Activated CD4-positive, alpha-beta memory T cell treated with anti-CD3 and anti-CD28 coated beads, Interleukin-2, amount 10 ng/mL, durations not matched to agents 7 days and 5 days (primary cell): ENCODE measurements at regions of chr17 and their contacts with region 1.

Region 1: DNA sequence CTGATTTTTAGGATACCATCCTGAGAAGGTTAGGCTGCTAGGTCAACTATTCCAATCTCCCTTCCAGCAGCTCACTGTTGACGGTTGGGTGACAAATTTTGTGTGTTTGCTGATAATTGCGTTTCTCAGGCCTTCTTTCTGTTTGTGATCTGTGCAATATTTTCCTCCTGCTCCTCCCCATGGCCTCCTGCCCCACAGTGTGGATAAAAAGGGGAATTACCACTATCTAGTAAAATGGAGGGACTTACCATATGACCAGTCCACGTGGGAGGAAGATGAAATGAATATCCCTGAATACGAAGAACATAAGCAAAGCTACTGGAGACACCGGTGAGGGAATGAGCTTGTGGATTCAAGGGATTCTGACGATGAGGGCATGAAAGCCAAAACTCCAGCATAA is 9.2 kb downstream of the CHD3 start:
- DNase-seq: no peak
- H3K4me3 Mint-ChIP-seq: no peak overlapping the region
- H3K27ac Mint-ChIP-seq: no peak overlapping the region
- H3K4me1 Mint-ChIP-seq: peaks cover 5% of the 10 kb centered on the region
- H3K27me3 Mint-ChIP-seq: no peaks in the 10 kb centered on the region

Region 2: GRCh38 chr17:7782237-7782636 is 115.5 kb before region 1 on chr17:
- CTCF ChIA-PET with region 1: no interaction called
- POLR2A ChIA-PET with region 1: no interaction called
- DNase-seq: no peak
- H3K4me3 Mint-ChIP-seq: no peak overlapping the region
- H3K27ac Mint-ChIP-seq: no peak overlapping the region
- H3K4me1 Mint-ChIP-seq: no peaks in the 10 kb centered on the region
- H3K27me3 Mint-ChIP-seq: peaks cover 12% of the 10 kb centered on the region

Region 3: GRCh38 chr17:7794075-7794663 is 103.6 kb before region 1 on chr17:
- CTCF ChIA-PET with region 1: no interaction called
- POLR2A ChIA-PET with region 1: no interaction called
- DNase-seq: no peak
- H3K4me3 Mint-ChIP-seq: no peak overlapping the region
- H3K27ac Mint-ChIP-seq: no peak overlapping the region
- H3K4me1 Mint-ChIP-seq: no peaks in the 10 kb centered on the region
- H3K27me3 Mint-ChIP-seq: no peaks in the 10 kb centered on the region

Region 4: DNA sequence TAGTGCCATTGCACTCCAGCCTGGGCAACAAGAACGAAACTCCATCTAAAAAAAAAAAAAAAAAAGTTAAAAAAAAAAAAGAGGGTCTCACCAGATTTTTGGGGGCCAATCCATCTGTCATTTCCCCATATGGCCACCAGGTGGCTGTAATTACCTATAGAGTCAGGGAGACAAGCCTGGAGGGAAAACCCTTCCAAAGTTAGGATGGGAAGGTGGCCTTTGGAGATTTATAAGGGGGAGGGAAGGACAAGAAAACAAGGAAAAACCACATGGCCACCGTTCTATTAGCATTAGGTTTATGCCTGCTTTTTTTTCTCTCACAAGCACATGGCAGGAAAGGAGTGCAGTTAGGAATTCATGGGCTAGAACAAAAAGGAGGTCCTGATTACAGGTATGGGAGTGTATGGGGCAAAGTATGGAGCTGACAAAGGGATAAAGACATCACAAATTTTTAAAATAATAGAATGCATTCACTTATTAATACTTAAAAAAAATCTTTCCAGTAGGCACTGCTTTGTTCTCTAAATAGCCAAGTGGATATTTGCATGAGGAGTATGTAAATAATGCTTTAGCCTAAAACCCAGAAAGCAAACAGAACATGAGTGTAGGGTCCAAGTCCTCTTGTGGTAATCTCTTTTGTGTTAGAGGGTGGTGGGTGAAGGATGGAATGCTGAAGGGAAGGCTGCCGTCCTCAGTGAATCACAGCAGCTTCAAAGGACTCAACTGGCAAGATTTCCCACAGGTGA is 34.9 kb before region 1 on chr17:
- CTCF ChIA-PET with region 1: interaction called, 13 read pairs
- POLR2A ChIA-PET with region 1: no interaction called
- DNase-seq: no peak
- H3K4me3 Mint-ChIP-seq: no peak overlapping the region
- H3K27ac Mint-ChIP-seq: no peak overlapping the region
- H3K4me1 Mint-ChIP-seq: peaks cover 11% of the 10 kb centered on the region
- H3K27me3 Mint-ChIP-seq: no peaks in the 10 kb centered on the region